ENCODE measurements at regions of chr2 and their contacts with region 1.

Region 1: DNA sequence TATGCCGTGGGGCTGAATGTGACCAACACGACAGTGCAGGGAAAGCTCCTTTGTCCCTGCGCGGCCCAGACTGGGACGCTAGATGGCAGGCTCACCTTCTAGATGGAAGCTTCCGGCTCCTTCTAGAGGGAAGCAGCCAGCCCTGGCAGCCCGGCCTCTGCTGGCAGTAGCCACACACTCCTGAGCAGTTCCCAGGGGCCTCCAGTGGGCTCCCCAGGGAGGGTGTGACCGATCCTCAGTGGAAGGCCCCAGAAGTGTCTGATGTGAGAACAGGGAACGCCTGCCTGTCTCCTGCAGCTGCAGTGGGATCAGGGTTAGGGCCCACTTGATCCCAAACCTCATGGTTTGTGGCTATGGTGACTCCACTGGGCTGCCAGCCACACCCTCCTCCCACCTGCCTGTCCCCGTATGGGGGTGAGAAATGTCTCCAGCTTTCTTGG is 48.5 kb upstream of the LRPPRC start:
- DNase-seq: peak; percentile 60 to 84 (median 70)
- ATAC-seq: peak; percentile 99
- H3K4me3 ChIP-seq: no peak overlapping the region
- H3K4me3 Mint-ChIP-seq: no peak overlapping the region
- H3K27ac ChIP-seq: no peak overlapping the region
- H3K27ac Mint-ChIP-seq: no peak overlapping the region
- H3K4me1 ChIP-seq: peaks cover 6% of the 10 kb centered on the region
- H3K4me1 Mint-ChIP-seq: no peaks in the 10 kb centered on the region
- H3K27me3 ChIP-seq: peaks cover 0 to 2% of the 10 kb centered on the region in 2 experiments
- H3K27me3 Mint-ChIP-seq: no peaks in the 10 kb centered on the region
- CTCF ChIP-seq: peak; percentile 90

Region 2: DNA sequence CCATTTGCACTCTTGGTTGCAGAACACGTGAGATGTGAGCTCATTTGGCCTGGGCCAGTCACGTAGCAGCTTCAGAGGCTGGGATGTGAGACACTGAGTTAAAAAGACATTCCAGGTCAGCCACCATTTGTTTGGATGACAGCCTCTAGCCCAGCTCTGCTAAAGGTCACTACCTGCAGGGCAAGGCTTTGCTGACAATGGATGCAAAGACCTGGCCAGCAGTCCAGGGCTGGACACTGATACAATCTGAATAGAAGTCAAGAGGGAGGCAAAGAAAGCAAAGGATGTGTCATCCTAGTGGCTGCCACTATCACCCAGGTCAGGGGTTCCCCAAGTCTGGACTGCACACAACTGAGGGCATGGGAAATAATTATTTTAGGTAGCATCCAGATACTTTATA is 35.4 kb after region 1 on chr2:
- CTCF ChIA-PET with region 1: no interaction called
- POLR2A ChIA-PET with region 1: no interaction called
- intact Hi-C with region 1: no loop called
- DNase-seq: no peak
- ATAC-seq: no peak
- H3K4me3 ChIP-seq: no peak overlapping the region
- H3K4me3 Mint-ChIP-seq: no peak overlapping the region
- H3K27ac ChIP-seq: no peak overlapping the region
- H3K27ac Mint-ChIP-seq: no peak overlapping the region
- H3K4me1 ChIP-seq: no peaks in the 10 kb centered on the region
- H3K4me1 Mint-ChIP-seq: peaks cover 6% of the 10 kb centered on the region
- H3K27me3 ChIP-seq: no peaks in the 10 kb centered on the region
- H3K27me3 Mint-ChIP-seq: no peaks in the 10 kb centered on the region
- CTCF ChIP-seq: no peak

Region 3: DNA sequence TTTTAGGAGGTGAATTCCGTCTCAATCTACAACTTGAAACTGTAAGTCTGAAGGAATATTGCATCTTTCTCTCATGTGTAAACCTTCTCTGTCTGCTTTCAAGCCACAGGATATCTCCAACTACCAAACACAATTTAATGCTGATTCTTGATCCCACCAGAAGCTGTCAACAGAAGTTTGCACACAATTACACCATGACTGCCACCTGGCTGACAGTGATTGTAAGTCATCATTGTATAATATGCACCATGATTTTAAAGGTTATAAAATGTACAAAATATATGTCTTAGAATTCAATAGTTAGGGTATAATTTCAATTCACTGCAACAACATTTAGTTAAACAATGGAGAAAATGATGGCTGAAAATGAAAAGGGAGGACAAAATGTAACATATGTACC is 298.6 kb after region 1 on chr2:
- CTCF ChIA-PET with region 1: interaction called, 7 read pairs
- POLR2A ChIA-PET with region 1: interaction called, 6 read pairs
- intact Hi-C with region 1: loop called (anchors 1 to 2 kb)
- DNase-seq: peak in 6 of 14 experiments; percentile 7 to 61 (median 32)
- ATAC-seq: peak; percentile 68
- H3K4me3 ChIP-seq: no peak overlapping the region
- H3K4me3 Mint-ChIP-seq: no peak overlapping the region
- H3K27ac ChIP-seq: no peak overlapping the region
- H3K27ac Mint-ChIP-seq: no peak overlapping the region
- H3K4me1 ChIP-seq: no peaks in the 10 kb centered on the region
- H3K4me1 Mint-ChIP-seq: peaks cover 10% of the 10 kb centered on the region
- H3K27me3 ChIP-seq: no peaks in the 10 kb centered on the region
- H3K27me3 Mint-ChIP-seq: no peaks in the 10 kb centered on the region
- CTCF ChIP-seq: peak; percentile 44

Region 4: DNA sequence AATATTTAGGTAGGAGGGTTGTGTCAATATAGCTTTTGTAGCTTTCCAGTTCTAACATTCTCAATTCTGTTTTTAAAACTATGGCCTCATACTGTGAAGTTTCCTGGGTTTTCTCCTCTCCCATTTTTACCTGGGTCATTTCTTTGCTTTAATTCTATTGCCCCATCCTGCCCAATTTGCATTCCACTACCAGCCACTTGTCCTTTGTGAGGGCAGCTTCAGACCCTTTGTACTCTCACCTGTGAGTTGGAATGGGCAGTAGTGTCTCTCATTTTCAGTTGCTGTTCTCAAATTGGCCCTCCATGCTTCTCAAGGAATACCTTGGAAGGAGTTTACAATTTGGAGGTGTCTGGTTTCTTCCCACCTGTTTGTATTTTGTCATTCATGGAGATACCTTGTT is 425.9 kb after region 1 on chr2:
- CTCF ChIA-PET with region 1: no interaction called
- POLR2A ChIA-PET with region 1: no interaction called
- intact Hi-C with region 1: loop called (anchors 5 kb)
- DNase-seq: no peak
- ATAC-seq: no peak
- H3K4me3 ChIP-seq: no peak overlapping the region
- H3K4me3 Mint-ChIP-seq: no peak overlapping the region
- H3K27ac ChIP-seq: no peak overlapping the region
- H3K27ac Mint-ChIP-seq: no peak overlapping the region
- H3K4me1 ChIP-seq: no peaks in the 10 kb centered on the region
- H3K4me1 Mint-ChIP-seq: no peaks in the 10 kb centered on the region
- H3K27me3 ChIP-seq: no peaks in the 10 kb centered on the region
- H3K27me3 Mint-ChIP-seq: no peaks in the 10 kb centered on the region
- CTCF ChIP-seq: no peak

Region 5: GRCh38 chr2:45494269-45494977 is 1450.1 kb after region 1 on chr2:
- CTCF ChIA-PET with region 1: interaction called, 3 read pairs
- POLR2A ChIA-PET with region 1: no interaction called
- intact Hi-C with region 1: loop called in 1 of 2 experiments (anchors 10 kb)
- DNase-seq: peak in 3 of 14 experiments; percentile 50 to 64 (median 59)
- ATAC-seq: no peak
- H3K4me3 ChIP-seq: no peak overlapping the region
- H3K4me3 Mint-ChIP-seq: no peak overlapping the region
- H3K27ac ChIP-seq: no peak overlapping the region
- H3K27ac Mint-ChIP-seq: no peak overlapping the region
- H3K4me1 ChIP-seq: no peaks in the 10 kb centered on the region
- H3K4me1 Mint-ChIP-seq: peaks cover 6% of the 10 kb centered on the region
- H3K27me3 ChIP-seq: no peaks in the 10 kb centered on the region
- H3K27me3 Mint-ChIP-seq: no peaks in the 10 kb centered on the region
- CTCF ChIP-seq: peak; percentile 78